ENCODE measurements at regions of chr16 and their contacts with region 1.

Region 1: GRCh38 chr16:27972500-27972899 is 91.0 kb downstream of the GSG1L start:
- DNase-seq: peak in 1 of 2 donors; percentile 16
- ATAC-seq: peak in 1 of 8 donors; percentile 44
- H3K4me3 ChIP-seq: no peak overlapping the region
- H3K27ac ChIP-seq: no peak overlapping the region
- H3K4me1 ChIP-seq: peaks cover 0 to 3% (median 0%) of the 10 kb centered on the region in 9 donors
- H3K27me3 ChIP-seq: peaks cover 0 to 13% (median 0%) of the 10 kb centered on the region in 7 donors
- CTCF ChIP-seq: peak in 8 of 9 donors; percentile 5 to 59 (median 54)

Region 2: DNA sequence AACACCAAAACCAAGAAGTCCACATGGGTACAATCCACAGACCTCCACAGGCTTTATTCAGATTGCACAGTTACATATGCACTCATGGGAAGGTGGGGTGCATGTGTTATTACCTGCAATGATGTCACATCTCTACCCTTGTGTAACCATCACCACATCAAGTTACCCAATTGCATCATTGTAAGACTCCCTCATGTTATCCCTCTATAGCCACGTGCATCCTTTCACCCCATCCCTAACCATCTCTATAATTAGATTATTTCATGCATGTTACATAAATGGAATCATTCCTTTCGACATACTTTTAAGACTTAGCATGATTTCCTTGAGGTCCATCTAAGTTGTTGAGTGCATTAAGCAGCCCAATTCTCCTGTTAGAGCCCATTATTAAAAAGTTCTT is 1314.0 kb before region 1 on chr16:
- intact Hi-C with region 1: loop called in 1 of 10 experiments (anchors 5 kb)
- DNase-seq: no peak
- ATAC-seq: no peak
- H3K4me3 ChIP-seq: no peak overlapping the region
- H3K27ac ChIP-seq: no peak overlapping the region
- H3K4me1 ChIP-seq: no peaks in the 10 kb centered on the region
- H3K27me3 ChIP-seq: peaks cover 0 to 6% (median 0%) of the 10 kb centered on the region in 7 donors
- CTCF ChIP-seq: no peak

Region 3: GRCh38 chr16:27645396-27645795 is 327.1 kb before region 1 on chr16:
- intact Hi-C with region 1: no loop called
- DNase-seq: no peak
- ATAC-seq: no peak
- H3K4me3 ChIP-seq: no peak overlapping the region
- H3K27ac ChIP-seq: no peak overlapping the region
- H3K4me1 ChIP-seq: peaks cover 0 to 9% (median 0%) of the 10 kb centered on the region in 9 donors
- H3K27me3 ChIP-seq: no peaks in the 10 kb centered on the region
- CTCF ChIP-seq: no peak